ENCODE measurements at regions of chr14 and their contacts with region 1.

Region 1: GRCh38 chr14:87944987-87945604 is 47.9 kb downstream of the GALC start:
- DNase-seq: peak; percentile 3
- H3K4me3 ChIP-seq: no peak overlapping the region; a peak in 1 of 4 replicates
- H3K27ac ChIP-seq: no peak overlapping the region
- H3K4me1 ChIP-seq: no peaks in the 10 kb centered on the region
- H3K27me3 ChIP-seq: no peaks in the 10 kb centered on the region
- CTCF ChIP-seq: peak; percentile 80
- EP300 ChIP-seq: no peak
- RAD21 ChIP-seq: peak; percentile 74

Region 2: GRCh38 chr14:87785897-87786296 is 159.2 kb before region 1 on chr14:
- CTCF ChIA-PET with region 1: no interaction called
- POLR2A ChIA-PET with region 1: no interaction called
- DNase-seq: no peak
- H3K4me3 ChIP-seq: no peak overlapping the region
- H3K27ac ChIP-seq: no peak overlapping the region
- H3K4me1 ChIP-seq: no peaks in the 10 kb centered on the region
- H3K27me3 ChIP-seq: no peaks in the 10 kb centered on the region
- CTCF ChIP-seq: no peak
- EP300 ChIP-seq: no peak
- RAD21 ChIP-seq: no peak

Region 3: DNA sequence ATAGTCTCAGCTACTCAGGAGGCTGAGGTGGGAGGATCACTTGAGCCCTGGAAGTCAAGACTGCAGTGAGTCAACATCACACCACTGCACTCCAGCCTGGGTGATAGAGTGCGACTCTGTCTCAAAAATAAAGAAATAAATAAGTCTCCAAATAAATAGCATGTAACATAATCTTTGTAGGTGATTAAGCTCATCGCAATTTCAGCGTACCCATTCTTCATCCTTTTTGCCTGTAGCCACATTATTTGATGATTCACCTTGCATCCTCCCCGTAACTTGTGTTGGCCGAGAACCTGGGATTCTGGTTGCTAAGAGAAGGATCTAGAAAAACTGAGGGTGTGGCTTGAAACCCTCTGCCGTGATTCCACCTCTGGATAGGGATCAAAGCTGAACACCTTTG is 67.2 kb before region 1 on chr14:
- CTCF ChIA-PET with region 1: no interaction called
- POLR2A ChIA-PET with region 1: no interaction called
- DNase-seq: no peak
- H3K4me3 ChIP-seq: no peak overlapping the region
- H3K27ac ChIP-seq: no peak overlapping the region
- H3K4me1 ChIP-seq: no peaks in the 10 kb centered on the region
- H3K27me3 ChIP-seq: no peaks in the 10 kb centered on the region
- CTCF ChIP-seq: no peak
- EP300 ChIP-seq: no peak
- RAD21 ChIP-seq: no peak

Region 4: DNA sequence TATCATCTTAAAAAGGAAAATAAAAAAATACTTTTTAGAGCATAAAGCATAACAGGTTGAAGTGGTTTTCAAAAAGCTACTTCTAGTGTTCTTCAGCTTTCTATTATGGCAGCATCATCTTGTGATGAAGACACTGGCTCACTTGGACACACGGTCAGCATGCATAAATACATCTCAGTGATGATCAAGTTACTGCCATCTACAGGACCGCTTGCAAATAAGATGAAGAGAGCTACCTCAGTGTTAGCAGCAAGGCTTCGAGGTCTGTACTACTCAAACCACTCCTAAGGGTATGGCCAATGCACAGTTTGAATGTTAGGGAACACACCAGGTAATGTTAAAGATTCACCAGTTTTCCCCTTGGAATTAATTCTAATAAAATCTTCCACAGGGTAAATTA is 10.9 kb before region 1 on chr14:
- CTCF ChIA-PET with region 1: interaction called, 31 read pairs
- POLR2A ChIA-PET with region 1: no interaction called
- DNase-seq: no peak
- H3K4me3 ChIP-seq: no peak overlapping the region
- H3K27ac ChIP-seq: no peak overlapping the region
- H3K4me1 ChIP-seq: no peaks in the 10 kb centered on the region
- H3K27me3 ChIP-seq: no peaks in the 10 kb centered on the region
- CTCF ChIP-seq: no peak
- EP300 ChIP-seq: no peak
- RAD21 ChIP-seq: no peak

Region 5: GRCh38 chr14:87955501-87955900 is 10.4 kb after region 1 on chr14:
- CTCF ChIA-PET with region 1: interaction called, 13 read pairs
- POLR2A ChIA-PET with region 1: no interaction called
- DNase-seq: no peak
- H3K4me3 ChIP-seq: no peak overlapping the region
- H3K27ac ChIP-seq: no peak overlapping the region
- H3K4me1 ChIP-seq: no peaks in the 10 kb centered on the region
- H3K27me3 ChIP-seq: no peaks in the 10 kb centered on the region
- CTCF ChIP-seq: no peak
- EP300 ChIP-seq: no peak
- RAD21 ChIP-seq: no peak

Region 6: GRCh38 chr14:87966816-87967215 is 21.7 kb after region 1 on chr14:
- CTCF ChIA-PET with region 1: interaction called, 24 read pairs
- POLR2A ChIA-PET with region 1: no interaction called
- DNase-seq: no peak
- H3K4me3 ChIP-seq: no peak overlapping the region
- H3K27ac ChIP-seq: no peak overlapping the region
- H3K4me1 ChIP-seq: no peaks in the 10 kb centered on the region
- H3K27me3 ChIP-seq: no peaks in the 10 kb centered on the region
- CTCF ChIP-seq: no peak
- EP300 ChIP-seq: no peak
- RAD21 ChIP-seq: no peak

Region 7: GRCh38 chr14:88034076-88034475 is 89.0 kb after region 1 on chr14:
- CTCF ChIA-PET with region 1: no interaction called
- POLR2A ChIA-PET with region 1: no interaction called
- DNase-seq: no peak
- H3K4me3 ChIP-seq: no peak overlapping the region
- H3K27ac ChIP-seq: no peak overlapping the region
- H3K4me1 ChIP-seq: no peaks in the 10 kb centered on the region
- H3K27me3 ChIP-seq: no peaks in the 10 kb centered on the region
- CTCF ChIP-seq: no peak
- EP300 ChIP-seq: no peak
- RAD21 ChIP-seq: no peak

Region 8: DNA sequence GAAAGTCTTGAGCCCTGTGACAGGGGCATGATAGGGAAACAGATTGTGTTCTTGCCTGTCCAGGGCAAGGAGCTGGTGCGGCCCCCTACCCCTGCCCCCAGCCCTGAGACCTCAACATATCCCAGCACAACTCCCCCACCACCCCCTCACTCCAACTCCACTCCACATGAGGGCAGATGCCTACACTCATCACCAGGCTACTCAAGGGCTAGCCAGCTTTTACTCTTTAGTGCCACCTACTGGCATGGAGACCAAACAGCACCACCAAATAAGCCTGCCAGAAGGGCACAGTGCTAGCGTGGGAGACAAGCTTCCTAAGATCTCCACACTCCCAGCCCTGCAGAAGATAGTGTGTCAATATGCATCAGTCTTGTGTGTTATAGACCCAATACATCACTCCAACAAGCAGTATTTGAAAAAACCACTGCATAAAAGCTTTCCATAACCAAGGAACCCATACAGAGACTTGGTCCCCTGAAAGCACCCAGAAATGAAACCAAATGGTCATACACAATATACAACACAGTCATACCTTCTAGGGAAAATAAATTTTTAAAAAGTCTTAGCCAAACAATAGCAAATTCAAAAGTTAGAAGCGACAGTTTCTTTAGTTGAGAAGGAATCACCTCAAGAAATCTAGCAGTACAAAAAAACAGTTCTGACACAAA is 223.5 kb after region 1 on chr14:
- CTCF ChIA-PET with region 1: interaction called, 45 read pairs
- POLR2A ChIA-PET with region 1: no interaction called
- DNase-seq: peak; percentile 57
- H3K4me3 ChIP-seq: no peak overlapping the region
- H3K27ac ChIP-seq: no peak overlapping the region
- H3K4me1 ChIP-seq: no peaks in the 10 kb centered on the region
- H3K27me3 ChIP-seq: no peaks in the 10 kb centered on the region
- CTCF ChIP-seq: peak; percentile 67
- EP300 ChIP-seq: no peak
- RAD21 ChIP-seq: peak; percentile 62

Measured in SK-N-SH (cell line).